Sigmoid colon (tissue), 7 donors: ENCODE measurements at regions of chr16 and their contacts with region 1.

Region 1: GRCh38 chr16:82229796-82230619 is 60.0 kb upstream of the MPHOSPH6 start:
- DNase-seq: peak; percentile 79
- H3K4me3 ChIP-seq: no peak overlapping the region
- H3K27ac ChIP-seq: no peak overlapping the region
- H3K4me1 ChIP-seq: peaks cover 0 to 4% (median 0%) of the 10 kb centered on the region in 4 donors
- H3K27me3 ChIP-seq: no peaks in the 10 kb centered on the region
- CTCF ChIP-seq: peak; percentile 68 to 93 (median 88)
- EP300 ChIP-seq: no peak
- POLR2A ChIP-seq: no peak

Region 2: GRCh38 chr16:81885976-81886586 is 343.9 kb before region 1 on chr16:
- intact Hi-C with region 1: loop called (anchors 1 kb)
- DNase-seq: no peak
- H3K4me3 ChIP-seq: no peak overlapping the region
- H3K27ac ChIP-seq: no peak overlapping the region
- H3K4me1 ChIP-seq: no peaks in the 10 kb centered on the region
- H3K27me3 ChIP-seq: no peaks in the 10 kb centered on the region
- CTCF ChIP-seq: peak in 2 of 4 experiments; percentile 40 to 42
- EP300 ChIP-seq: no peak
- POLR2A ChIP-seq: no peak

Region 3: GRCh38 chr16:81940781-81941560 is 289.0 kb before region 1 on chr16:
- intact Hi-C with region 1: loop called (anchors 2 kb)
- DNase-seq: no peak
- H3K4me3 ChIP-seq: no peak overlapping the region
- H3K27ac ChIP-seq: no peak overlapping the region
- H3K4me1 ChIP-seq: peaks cover 0 to 11% (median 5%) of the 10 kb centered on the region in 4 donors
- H3K27me3 ChIP-seq: no peaks in the 10 kb centered on the region
- CTCF ChIP-seq: peak in 3 of 4 experiments; percentile 24 to 40 (median 35)
- EP300 ChIP-seq: no peak
- POLR2A ChIP-seq: no peak

Region 4: DNA sequence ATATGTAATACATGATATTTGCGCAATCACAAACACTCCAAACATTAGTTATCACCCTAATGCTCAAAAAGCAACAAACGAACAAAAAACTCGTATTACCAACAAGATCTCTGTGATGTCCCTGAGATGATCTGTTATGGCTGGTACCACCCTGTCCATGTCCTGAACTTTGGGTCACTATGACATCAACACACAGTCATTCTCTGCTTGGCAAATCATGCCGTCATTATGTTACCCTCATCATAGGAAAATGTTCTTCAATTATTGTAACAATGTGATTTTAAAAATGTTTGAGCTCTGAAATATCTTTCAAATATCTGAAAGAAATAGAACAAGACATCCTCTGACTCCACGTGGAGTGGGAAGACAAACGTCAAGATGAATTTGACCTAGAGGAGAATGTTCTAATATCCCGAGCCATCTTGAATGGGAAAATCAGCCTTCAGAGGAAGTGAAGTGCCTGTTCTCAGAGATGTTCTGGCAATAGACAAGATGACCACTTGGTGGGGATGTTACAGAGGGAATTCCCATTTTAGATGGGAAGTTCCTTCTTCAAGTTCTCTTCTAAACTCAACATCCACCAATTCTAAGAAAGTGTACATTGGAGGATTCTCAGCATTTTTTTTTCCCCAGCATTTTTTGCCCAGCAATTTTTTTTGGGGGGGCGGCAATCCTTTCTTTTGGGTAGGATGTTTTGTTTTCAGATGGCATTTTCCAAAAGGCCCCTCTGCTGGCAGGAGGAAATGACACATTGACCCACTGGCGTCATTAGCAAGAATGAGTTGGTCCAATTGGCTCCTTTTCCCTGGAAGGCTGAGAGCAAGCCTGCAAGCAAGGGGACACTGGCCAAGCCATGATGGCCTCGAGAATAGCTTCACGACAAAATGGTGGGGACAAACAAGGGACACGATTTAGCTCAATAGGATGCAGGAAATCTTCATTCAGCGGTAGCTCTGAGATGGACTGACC is 198.6 kb before region 1 on chr16:
- intact Hi-C with region 1: loop called (anchors 2 kb)
- DNase-seq: no peak
- H3K4me3 ChIP-seq: no peak overlapping the region
- H3K27ac ChIP-seq: no peak overlapping the region
- H3K4me1 ChIP-seq: no peaks in the 10 kb centered on the region
- H3K27me3 ChIP-seq: no peaks in the 10 kb centered on the region
- CTCF ChIP-seq: peak in 3 of 4 experiments; percentile 23 to 47 (median 44)
- EP300 ChIP-seq: no peak
- POLR2A ChIP-seq: no peak